ENCODE measurements at regions of chr4 and their contacts with region 1.

Region 1: GRCh38 chr4:145609481-145610427 is 9.4 kb upstream of the MMAA start:
- DNase-seq: no peak
- H3K4me3 ChIP-seq: no peak overlapping the region
- CTCF ChIP-seq: peak; percentile 70

Region 2: DNA sequence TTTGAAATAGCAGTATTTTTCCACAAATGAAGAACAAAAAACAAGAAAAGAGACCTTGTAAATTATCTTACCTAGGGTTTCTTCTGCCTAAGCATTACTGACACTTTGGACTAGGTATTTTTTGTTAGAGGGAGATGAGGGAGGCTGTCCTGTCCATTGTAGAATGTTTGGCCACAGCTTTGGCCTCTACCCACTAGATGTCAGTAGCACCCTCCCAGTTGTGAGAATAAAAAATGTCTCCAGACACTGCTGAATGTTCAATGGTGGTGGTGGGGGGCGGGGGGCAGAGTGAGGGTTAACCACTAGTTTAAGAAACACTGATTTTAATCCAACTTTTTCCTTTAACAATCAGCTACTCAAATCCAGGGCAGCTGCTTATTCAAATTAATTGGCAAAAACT is 455.2 kb before region 1 on chr4:
- CTCF ChIA-PET with region 1: interaction called, 33 read pairs
- POLR2A ChIA-PET with region 1: no interaction called
- DNase-seq: no peak
- H3K4me3 ChIP-seq: no peak overlapping the region
- CTCF ChIP-seq: peak; percentile 59

Region 3: DNA sequence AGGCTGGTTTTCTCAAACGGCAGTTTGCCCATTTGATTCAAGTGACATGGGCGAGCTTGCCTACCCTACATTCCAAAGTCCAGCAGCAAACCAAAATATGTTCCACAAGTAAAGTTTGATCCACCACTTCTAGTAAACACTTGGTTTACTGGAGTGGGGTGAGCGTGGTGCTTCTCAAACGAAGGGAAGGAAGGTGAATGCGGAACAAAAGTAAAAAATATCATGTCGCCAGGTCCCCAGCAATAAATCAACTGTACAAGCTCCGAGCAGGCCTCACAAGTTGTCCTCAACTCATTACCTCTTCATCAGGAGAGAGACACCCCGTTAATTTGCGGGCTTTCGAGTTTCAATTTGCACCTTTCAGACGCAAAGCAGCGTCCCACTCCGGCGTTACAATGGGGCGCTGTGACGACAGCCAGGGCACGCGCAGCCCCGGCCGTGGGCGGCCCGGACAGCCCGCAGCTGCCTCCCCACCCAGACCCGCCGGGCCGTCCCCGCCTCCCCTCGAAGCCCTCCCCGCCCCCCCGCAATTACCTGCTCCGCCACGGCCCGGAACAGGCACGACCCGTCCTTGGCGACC is 430.4 kb before region 1 on chr4:
- CTCF ChIA-PET with region 1: interaction called, 12 read pairs
- POLR2A ChIA-PET with region 1: no interaction called
- DNase-seq: no peak
- H3K4me3 ChIP-seq: peak overlapping the region; percentile 77
- CTCF ChIP-seq: no peak

Region 4: DNA sequence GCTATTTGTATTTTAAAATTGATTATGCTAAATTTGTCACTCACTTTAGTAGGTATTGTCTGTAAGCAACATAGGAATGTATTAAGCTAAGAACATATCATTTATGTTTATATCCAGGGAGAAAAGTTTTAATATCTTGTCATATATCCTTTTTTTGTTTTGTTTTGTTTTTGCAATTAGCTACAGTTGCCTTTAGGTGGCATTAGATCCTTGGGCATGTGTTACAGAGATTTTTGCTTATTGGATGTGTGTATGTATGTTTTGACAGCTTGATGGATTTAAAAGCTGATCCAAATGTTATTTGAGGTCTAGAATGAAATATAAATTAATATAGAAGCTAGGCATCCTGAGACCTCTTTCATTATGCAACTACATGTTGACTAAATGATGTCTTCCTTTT is 393.2 kb before region 1 on chr4:
- CTCF ChIA-PET with region 1: interaction called, 121 read pairs
- POLR2A ChIA-PET with region 1: no interaction called
- DNase-seq: no peak
- H3K4me3 ChIP-seq: no peak overlapping the region
- CTCF ChIP-seq: peak; percentile 33

Measured in AG04449 (cell line).